Activated naive CD4-positive, alpha-beta T cell treated with anti-CD3 and anti-CD28 coated beads for 36 hours (primary cell): ENCODE measurements at regions of chr2 and their contacts with region 1.

Region 1: DNA sequence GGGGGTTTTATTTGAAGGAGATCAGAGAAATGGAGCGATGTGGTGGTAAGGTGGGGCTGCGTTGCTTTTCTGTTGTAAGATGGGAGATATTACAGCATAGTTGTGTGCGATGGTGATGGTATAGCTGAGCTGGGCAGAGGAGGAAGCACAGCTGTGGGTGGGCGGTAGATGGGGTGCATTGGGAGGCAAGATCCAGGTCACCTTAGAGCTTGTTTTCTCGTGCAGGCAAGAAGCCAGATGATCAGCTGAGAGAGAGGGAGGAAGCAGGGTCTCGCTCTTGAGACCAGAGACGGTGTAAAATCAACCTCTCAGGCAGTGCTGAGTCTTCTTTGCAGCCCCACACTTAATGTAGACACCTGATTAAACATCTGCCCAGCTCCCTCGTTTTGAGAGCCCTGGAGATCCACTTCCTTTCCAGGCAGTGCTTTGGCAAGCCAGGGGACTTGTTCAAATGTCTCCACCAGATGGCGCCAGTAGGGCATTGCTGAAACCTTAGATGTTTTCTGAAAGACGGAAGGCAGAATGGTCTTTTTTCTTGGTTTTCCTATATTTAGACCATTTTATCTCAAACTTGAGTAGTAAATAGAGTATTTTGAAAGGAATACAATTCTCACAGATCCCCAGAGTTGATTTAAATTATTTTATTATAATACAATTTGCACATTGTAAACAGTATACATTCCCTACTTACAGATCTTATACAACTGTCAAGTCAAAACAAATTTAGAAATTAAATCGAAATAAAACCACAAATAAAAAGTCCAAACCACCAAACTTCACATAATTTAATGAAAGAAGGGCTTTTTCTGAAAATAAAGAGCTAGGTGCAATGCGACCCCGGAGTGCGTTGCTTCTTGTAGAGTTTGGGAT is 21.1 kb upstream of the LYPD6B start:
- DNase-seq: peak; percentile 88
- H3K4me3 Mint-ChIP-seq: no peak overlapping the region
- H3K27ac Mint-ChIP-seq: no peak overlapping the region
- H3K4me1 Mint-ChIP-seq: peaks cover 2% of the 10 kb centered on the region
- H3K27me3 Mint-ChIP-seq: peaks cover 1% of the 10 kb centered on the region

Region 2: DNA sequence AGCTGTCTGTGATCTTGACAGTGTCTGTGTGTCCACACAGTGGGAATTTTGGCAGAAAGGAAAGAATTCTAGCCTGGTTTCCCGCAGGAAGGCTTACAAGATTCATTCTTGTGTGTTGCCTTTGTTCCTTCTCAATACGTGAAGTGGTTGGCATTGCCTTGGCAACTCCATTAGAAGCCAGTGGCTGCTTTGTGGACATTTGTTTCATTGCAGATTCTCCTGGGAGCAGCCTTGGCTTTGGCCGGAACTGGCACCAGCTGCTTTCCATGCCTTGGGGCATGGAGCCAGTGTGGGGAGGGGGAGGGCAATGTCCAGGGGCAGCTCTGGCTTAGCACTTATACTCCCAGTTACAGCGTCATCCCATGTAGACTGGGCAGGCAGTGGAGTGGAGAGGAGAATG is 102.9 kb before region 1 on chr2:
- CTCF ChIA-PET with region 1: no interaction called
- intact Hi-C with region 1: no loop called
- DNase-seq: no peak
- H3K4me3 Mint-ChIP-seq: no peak overlapping the region
- H3K27ac Mint-ChIP-seq: no peak overlapping the region
- H3K4me1 Mint-ChIP-seq: peaks cover 9% of the 10 kb centered on the region
- H3K27me3 Mint-ChIP-seq: no peaks in the 10 kb centered on the region

Region 3: GRCh38 chr2:149000158-149000938 is 17.0 kb before region 1 on chr2:
- CTCF ChIA-PET with region 1: interaction called, 16 read pairs
- intact Hi-C with region 1: no loop called
- DNase-seq: no peak
- H3K4me3 Mint-ChIP-seq: no peak overlapping the region
- H3K27ac Mint-ChIP-seq: no peak overlapping the region
- H3K4me1 Mint-ChIP-seq: peaks cover 17% of the 10 kb centered on the region
- H3K27me3 Mint-ChIP-seq: no peaks in the 10 kb centered on the region

Region 4: DNA sequence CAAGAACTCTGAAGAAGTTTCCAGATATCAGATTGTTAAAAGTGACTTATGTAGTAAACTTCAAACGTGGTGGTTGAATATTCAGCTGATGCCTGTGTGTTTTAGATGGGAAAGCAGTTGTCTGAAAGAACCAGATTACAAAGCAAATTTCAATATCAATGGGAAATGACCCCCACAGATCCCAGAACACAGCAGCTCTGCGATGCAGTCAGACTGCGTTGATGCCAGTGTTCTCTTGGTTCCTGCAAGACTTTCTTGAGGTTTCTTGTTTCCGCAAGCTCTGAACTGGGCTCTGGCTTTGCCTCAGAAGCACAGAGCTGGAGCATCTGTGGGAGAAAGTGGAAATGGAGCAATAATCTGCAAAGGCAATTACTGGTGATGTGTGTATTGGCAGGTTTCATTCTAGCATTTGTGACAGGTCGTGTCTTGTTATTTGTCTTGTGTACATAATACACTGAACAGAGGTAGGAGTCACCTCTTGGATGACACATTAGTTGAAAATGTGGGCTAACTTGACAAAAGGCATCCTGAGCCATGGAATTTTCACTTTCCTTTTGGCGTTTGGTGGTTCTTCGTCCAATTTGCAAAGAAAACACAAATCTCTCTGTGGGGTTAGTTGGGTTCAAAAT is 10.4 kb after region 1 on chr2:
- CTCF ChIA-PET with region 1: interaction called, 11 read pairs
- intact Hi-C with region 1: no loop called
- DNase-seq: no peak
- H3K4me3 Mint-ChIP-seq: no peak overlapping the region
- H3K27ac Mint-ChIP-seq: no peak overlapping the region
- H3K4me1 Mint-ChIP-seq: peaks cover 2% of the 10 kb centered on the region
- H3K27me3 Mint-ChIP-seq: peaks cover 6% of the 10 kb centered on the region

Region 5: GRCh38 chr2:149313512-149313972 is 296.2 kb after region 1 on chr2:
- CTCF ChIA-PET with region 1: interaction called, 15 read pairs
- intact Hi-C with region 1: loop called (anchors 5 kb)
- DNase-seq: no peak
- H3K4me3 Mint-ChIP-seq: no peak overlapping the region
- H3K27ac Mint-ChIP-seq: no peak overlapping the region
- H3K4me1 Mint-ChIP-seq: peaks cover 4% of the 10 kb centered on the region
- H3K27me3 Mint-ChIP-seq: peaks cover 12% of the 10 kb centered on the region